Activated CD8-positive, alpha-beta memory T cell treated with anti-CD3 and anti-CD28 coated beads, Interleukin-2, amount 10 ng/mL, durations not matched to agents 7 days and 5 days (primary cell): ENCODE measurements at regions of chr4 and their contacts with region 1.

Region 1: GRCh38 chr4:75940692-75941253 is at the start of gene NAAA:
- DNase-seq: peak; percentile 91
- ATAC-seq: peak; percentile 88
- H3K4me3 Mint-ChIP-seq: peak within 1 kb of the TSS; percentile 94
- H3K27ac Mint-ChIP-seq: peak within 1 kb of the TSS; percentile 98
- H3K4me1 Mint-ChIP-seq: peaks cover 23% of the 10 kb centered on the region
- H3K27me3 Mint-ChIP-seq: no peaks in the 10 kb centered on the region
- total RNA-seq, gene NAAA: 29.3 to 40.6 TPM

Region 2: DNA sequence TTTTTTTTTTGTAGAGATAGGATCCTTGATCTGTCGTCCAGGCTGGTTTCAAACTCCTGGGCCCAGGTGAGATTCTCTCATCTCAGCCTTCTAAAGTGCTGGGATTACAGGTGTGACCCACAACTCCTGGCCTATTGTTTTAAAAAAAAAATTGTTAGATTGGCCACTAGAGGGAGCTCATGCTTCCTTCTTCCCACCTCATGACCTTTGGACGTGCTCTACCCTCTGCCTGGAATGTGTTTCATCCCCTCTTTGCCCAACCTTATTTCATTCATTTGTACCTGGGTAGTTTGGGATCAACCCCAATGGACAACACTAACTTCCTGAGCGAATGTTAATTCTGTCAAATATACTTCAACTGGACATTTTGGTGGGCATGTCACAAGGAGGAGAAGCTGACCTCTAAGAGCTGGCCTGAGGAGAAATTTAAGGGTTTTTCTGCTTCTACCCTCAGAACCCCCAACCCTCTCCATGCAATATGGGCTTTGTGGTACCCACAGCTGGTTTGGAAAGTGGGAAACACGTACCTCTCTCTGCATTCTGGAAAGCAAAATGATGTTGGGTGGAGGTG is 44.9 kb before region 1 on chr4:
- CTCF ChIA-PET with region 1: interaction called, 24 read pairs
- DNase-seq: no peak
- ATAC-seq: peak; percentile 70
- H3K4me3 Mint-ChIP-seq: no peak overlapping the region
- H3K27ac Mint-ChIP-seq: no peak overlapping the region
- H3K4me1 Mint-ChIP-seq: no peaks in the 10 kb centered on the region
- H3K27me3 Mint-ChIP-seq: peaks cover 9% of the 10 kb centered on the region

Region 3: DNA sequence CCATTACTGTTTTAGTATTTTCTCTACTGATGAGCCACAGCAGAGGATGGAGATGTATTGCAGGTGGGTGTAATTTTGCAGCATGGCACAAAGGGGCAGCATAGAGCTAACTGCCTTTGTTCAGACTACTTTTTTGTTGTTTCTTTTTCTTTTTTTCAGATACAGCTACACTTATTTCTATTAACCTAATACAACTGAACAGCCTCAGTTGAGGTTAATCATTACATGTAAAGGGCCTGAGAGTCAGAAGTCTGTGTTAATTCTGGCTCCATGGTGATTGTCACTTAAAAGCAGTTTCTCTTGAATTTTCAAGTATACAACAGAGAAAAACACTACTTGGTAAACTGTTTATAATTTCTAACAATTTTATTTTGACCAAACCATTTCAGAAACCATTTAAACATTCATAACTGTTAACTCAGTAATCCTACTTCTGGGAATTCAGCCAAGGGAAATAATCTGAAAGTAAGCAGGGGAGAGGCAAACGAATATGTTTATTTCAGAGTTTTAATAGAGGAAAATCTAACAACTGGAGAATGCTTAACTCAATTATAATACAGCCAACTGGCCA is 24.6 kb before region 1 on chr4:
- CTCF ChIA-PET with region 1: interaction called, 26 read pairs
- DNase-seq: peak; percentile 50
- ATAC-seq: peak; percentile 66
- H3K4me3 Mint-ChIP-seq: no peak overlapping the region
- H3K27ac Mint-ChIP-seq: peak overlapping the region; percentile 39
- H3K4me1 Mint-ChIP-seq: peaks cover 1% of the 10 kb centered on the region
- H3K27me3 Mint-ChIP-seq: no peaks in the 10 kb centered on the region